ENCODE measurements at regions of chr22 and their contacts with region 1.

Region 1: GRCh38 chr22:42662114-42663021 is 13.2 kb upstream of the CYB5R3 start:
- DNase-seq: peak; percentile 67 to 97 (median 84)
- ATAC-seq: peak; percentile 88 to 97 (median 96)
- H3K4me3 ChIP-seq: peak overlapping the region; percentile 23 to 48 (median 38)
- H3K27ac ChIP-seq: no peak overlapping the region
- H3K4me1 ChIP-seq: no peaks in the 10 kb centered on the region
- H3K27me3 ChIP-seq: no peaks in the 10 kb centered on the region
- CTCF ChIP-seq: peak; percentile 69 to 84 (median 76)

Region 2: GRCh38 chr22:42780070-42780540 is 117.7 kb after region 1 on chr22:
- intact Hi-C with region 1: loop called in 1 of 3 experiments (anchors 10 kb)
- DNase-seq: peak in 3 of 6 donors; percentile 55 to 64 (median 61)
- ATAC-seq: peak; percentile 76 to 98 (median 94)
- H3K4me3 ChIP-seq: no peak overlapping the region
- H3K27ac ChIP-seq: no peak overlapping the region
- H3K4me1 ChIP-seq: no peaks in the 10 kb centered on the region
- H3K27me3 ChIP-seq: no peaks in the 10 kb centered on the region
- CTCF ChIP-seq: peak; percentile 76 to 84 (median 76)